T-cell (primary cell): ENCODE measurements at regions of chr1 and their contacts with region 1.

Region 1: DNA sequence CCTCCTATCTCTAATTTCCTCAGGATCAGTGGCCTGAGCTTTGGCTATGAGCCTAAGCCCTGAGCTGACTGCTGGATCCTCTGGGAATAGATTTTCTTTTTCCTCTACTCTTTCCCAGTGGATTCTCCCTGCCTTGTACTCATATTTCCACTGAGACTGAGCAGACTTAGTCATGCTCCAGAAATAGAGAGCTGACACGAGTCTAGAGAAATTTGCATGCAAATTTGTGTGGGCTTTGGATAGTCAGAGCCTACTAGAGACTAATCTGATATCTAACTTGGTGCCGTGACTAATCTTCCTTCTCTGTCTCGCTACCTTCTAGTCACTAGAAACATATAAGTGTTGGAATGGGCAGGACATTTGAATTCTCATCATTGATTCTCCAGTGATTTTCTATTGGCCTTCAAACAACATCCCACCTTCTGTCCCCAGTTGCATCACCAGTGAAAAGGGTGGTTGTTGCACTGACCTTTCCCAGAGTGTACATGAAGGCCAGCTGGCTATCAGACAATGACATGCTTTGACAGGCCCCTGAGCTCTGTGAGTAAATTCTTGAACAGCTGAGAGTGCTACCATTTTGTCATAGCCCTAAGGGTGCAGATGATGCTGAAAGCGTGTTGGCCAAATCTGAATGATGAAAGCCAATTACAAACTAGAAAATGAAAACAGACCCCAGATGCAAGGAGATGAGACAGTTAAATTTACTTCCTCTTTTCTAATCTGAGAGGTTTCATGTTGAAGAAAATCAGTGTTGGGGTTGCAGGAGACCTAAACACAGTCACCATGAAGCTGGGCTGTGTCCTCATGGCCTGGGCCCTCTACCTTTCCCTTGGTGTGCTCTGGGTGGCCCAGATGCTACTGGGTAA is at the start of gene FCRLA:
- DNase-seq: no peak
- ATAC-seq: no peak
- H3K4me3 ChIP-seq: no peak within 1 kb of the TSS
- H3K4me3 Mint-ChIP-seq: no peak within 1 kb of the TSS
- H3K27ac ChIP-seq: no peak within 1 kb of the TSS
- H3K27ac Mint-ChIP-seq: no peak within 1 kb of the TSS
- H3K4me1 ChIP-seq: no peaks in the 10 kb centered on the region
- H3K4me1 Mint-ChIP-seq: peaks cover 0 to 2% (median 0%) of the 10 kb centered on the region in 3 donors
- H3K27me3 ChIP-seq: peaks cover 0 to 10% of the 10 kb centered on the region in 2 experiments
- H3K27me3 Mint-ChIP-seq: peaks cover 3 to 5% of the 10 kb centered on the region in 2 donors
- total RNA-seq, gene FCRLA: 0.68 to 6.5 (median 2.7) TPM

Region 2: DNA sequence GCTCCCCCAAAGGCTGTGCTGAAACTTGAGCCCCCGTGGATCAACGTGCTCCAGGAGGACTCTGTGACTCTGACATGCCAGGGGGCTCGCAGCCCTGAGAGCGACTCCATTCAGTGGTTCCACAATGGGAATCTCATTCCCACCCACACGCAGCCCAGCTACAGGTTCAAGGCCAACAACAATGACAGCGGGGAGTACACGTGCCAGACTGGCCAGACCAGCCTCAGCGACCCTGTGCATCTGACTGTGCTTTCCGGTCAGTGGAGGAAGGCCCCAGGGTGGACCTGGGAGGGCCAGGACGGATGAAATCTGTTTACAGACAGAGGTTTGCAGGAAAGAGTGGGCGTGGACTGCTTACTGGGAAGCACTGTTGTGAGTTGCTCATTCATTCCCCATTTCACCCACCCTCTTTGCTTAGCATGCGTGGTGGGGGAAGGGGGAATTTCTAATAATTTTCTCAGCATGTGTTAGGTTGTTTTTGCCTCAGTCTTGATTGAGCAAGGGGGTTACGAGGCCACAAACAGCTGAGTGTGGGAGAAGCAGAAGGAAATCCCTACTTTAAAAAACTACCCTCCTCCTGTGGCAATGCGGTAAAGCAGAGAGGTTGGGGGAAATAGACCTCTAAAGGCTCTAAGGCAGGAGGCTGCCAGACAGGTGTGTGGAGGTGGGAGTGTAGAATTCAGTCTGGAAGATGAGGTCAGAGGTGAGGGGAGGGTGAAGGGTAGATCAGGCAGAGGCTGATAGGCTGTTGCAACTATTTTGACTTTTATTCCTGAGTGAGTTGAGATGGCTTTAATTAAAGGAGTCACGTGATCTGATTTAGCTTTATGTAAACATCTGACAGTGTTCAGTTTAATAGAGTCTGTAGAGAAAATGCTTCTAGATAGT is 200.1 kb before region 1 on chr1:
- CTCF ChIA-PET with region 1: no interaction called
- POLR2A ChIA-PET with region 1: interaction called in 1 of 2 experiments, 12 read pairs
- DNase-seq: no peak
- ATAC-seq: no peak
- H3K4me3 ChIP-seq: no peak overlapping the region
- H3K4me3 Mint-ChIP-seq: no peak overlapping the region
- H3K27ac ChIP-seq: no peak overlapping the region
- H3K27ac Mint-ChIP-seq: no peak overlapping the region
- H3K4me1 ChIP-seq: peaks cover 0 to 2% of the 10 kb centered on the region in 2 experiments
- H3K4me1 Mint-ChIP-seq: peaks cover 0 to 8% (median 0%) of the 10 kb centered on the region in 3 donors
- H3K27me3 ChIP-seq: peaks cover 2 to 8% of the 10 kb centered on the region in 2 experiments
- H3K27me3 Mint-ChIP-seq: peaks cover 27 to 32% of the 10 kb centered on the region in 2 donors